Ascending aorta (tissue), 2 donors: ENCODE measurements at regions of chr2 and their contacts with region 1.

Region 1: GRCh38 chr2:28594289-28595108 is 98.6 kb downstream of the PLB1 start:
- DNase-seq: peak; percentile 76 to 96
- H3K4me3 ChIP-seq: peak overlapping the region; percentile 15 to 18
- H3K27ac ChIP-seq: peak overlapping the region; percentile 89 to 93
- H3K4me1 ChIP-seq: peaks cover 0 to 39% of the 10 kb centered on the region in 2 donors
- H3K27me3 ChIP-seq: no peaks in the 10 kb centered on the region
- CTCF ChIP-seq: peak; percentile 77 to 89 (median 86)

Region 2: DNA sequence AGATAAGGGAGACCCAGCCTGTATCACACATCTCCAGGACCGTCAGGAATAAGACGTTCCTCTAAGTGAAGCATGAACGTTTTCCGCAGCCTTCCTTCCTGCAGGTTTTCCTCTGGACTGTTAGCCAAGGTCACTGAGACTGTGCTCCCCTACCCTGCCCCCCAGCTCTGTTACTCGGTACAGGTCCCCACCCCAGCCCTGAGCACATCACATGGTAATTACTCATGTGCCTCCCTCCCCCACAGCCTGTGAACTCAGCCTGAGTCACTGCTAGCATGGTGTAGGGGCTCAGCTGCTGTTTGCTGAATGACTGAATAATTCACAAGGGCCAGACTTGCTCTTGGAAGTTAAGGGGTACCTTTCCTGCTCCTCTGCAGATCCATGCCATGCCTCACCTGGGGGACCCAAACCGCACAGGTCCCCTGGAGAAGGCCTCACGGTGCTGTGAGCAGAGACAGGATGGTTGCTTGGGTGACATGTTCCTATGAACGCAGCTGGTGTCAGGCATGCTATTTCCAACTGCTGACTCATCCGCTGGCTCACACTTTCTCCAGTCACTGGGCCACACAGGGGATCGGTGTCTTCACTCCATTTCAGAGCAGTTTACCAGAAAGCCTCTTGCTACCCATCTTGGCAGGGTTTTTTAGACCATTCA is 10.5 kb before region 1 on chr2:
- intact Hi-C with region 1: loop called (anchors 1 kb)
- DNase-seq: peak; percentile 78 to 93
- H3K4me3 ChIP-seq: no peak overlapping the region
- H3K27ac ChIP-seq: peak overlapping the region; percentile 80 to 90
- H3K4me1 ChIP-seq: peaks cover 4 to 15% of the 10 kb centered on the region in 2 donors
- H3K27me3 ChIP-seq: no peaks in the 10 kb centered on the region
- CTCF ChIP-seq: no peak

Region 3: DNA sequence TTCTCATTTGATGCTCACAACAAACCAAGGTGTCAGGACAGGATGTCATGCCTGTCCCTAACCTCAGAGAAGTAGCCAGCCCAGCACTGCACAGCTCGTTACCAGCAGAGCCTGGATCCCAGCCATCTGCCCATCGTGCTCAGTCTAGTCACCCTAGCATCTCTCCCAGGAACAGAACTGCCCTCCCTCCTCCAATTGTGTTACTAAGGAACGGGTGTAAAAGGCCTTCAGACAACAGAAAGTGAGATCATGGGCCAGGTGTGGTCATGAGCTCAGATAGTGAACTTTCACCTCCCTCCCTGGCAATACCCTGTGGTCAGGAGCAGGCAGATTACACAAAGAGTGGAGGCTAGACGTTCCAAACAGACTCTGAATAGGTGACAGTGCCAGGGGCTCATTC is 45.3 kb after region 1 on chr2:
- intact Hi-C with region 1: loop called (anchors 1 kb)
- DNase-seq: no peak
- H3K4me3 ChIP-seq: no peak overlapping the region
- H3K27ac ChIP-seq: peak overlapping the region; percentile 94 to 98
- H3K4me1 ChIP-seq: peaks cover 30 to 49% of the 10 kb centered on the region in 2 donors
- H3K27me3 ChIP-seq: no peaks in the 10 kb centered on the region
- CTCF ChIP-seq: no peak

Region 4: DNA sequence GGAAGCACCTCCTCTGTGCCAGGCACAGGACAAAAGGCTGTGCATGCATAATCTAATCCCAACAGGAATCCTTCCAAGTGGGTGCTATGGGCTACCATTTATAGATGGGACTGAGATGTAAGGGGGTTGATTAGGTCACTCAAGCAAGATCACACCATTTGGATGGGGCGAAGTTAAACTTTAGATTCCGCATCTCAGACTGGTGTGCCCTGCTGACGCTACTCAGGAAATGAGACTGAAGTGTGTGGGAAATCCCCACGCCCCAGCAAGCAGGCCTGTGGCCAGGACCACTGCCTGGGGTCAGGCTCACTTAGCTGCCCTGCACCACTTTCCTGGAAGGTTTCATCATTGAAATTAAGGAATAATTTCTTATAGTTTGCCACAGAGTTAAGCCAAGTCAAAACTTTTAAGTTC is 86.7 kb after region 1 on chr2:
- intact Hi-C with region 1: loop called (anchors 1 kb)
- DNase-seq: no peak
- H3K4me3 ChIP-seq: no peak overlapping the region
- H3K27ac ChIP-seq: peak overlapping the region; percentile 32 to 64
- H3K4me1 ChIP-seq: peaks cover 6 to 30% of the 10 kb centered on the region in 2 donors
- H3K27me3 ChIP-seq: no peaks in the 10 kb centered on the region
- CTCF ChIP-seq: no peak

Region 5: GRCh38 chr2:28751252-28751955 is 156.9 kb after region 1 on chr2 and contains the start of gene PPP1CB:
- intact Hi-C with region 1: loop called (anchors 1 kb)
- DNase-seq: peak; percentile 88 to 97
- H3K4me3 ChIP-seq: peak within 1 kb of the TSS; percentile 75 to 89
- H3K27ac ChIP-seq: peak within 1 kb of the TSS; percentile 100
- H3K4me1 ChIP-seq: peaks cover 15 to 40% of the 10 kb centered on the region in 2 donors
- H3K27me3 ChIP-seq: no peaks in the 10 kb centered on the region
- CTCF ChIP-seq: peak; percentile 9 to 34 (median 26)
- total RNA-seq, gene PPP1CB: 196 TPM